ENCODE measurements at regions of chr6 and their contacts with region 1.

Region 1: DNA sequence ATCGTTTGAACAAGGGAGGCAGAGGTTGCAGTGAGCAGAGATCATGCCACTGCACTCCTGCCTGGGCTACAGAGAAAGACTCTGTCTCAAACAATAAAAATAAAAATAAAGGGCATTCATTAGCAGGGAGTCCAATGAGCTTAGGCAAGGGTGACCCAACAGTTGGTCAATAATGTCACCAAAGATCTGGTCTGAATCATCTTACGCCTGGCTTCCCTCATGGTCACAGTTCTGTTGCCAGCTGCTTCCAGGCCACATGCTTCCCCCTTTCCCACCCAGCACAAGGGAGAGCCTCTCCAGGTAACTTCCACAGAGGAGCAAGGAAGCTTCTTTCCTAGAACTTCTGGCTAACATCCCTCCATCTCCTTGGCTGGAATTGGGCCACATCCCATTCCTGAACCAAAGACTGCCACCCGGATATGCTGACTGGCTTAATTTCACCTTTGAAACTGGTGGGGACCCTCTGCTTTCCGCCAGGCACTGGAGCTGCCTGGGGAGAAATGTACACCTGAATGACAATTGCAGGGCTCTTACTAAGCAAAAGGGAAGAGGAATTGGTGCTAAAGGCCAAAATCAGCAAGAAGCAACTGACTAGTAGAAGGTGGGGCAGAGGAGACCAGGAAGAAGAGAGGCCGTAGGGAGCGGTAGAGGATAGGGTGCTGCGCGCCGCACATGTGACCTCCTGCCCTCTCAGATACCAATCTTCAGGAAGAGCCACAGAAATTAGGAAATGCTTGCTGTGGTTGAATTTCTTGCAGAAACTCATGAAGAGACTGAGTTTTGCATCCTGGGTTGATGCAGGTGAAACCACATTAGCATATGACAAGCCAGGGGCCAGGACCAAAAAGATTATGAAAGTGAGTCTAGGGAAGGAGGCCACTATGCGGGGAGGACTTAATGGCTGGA is 8.3 kb upstream of the SCML4 start:
- DNase-seq: no peak
- H3K4me3 ChIP-seq: no peak overlapping the region
- CTCF ChIP-seq: no peak

Region 2: DNA sequence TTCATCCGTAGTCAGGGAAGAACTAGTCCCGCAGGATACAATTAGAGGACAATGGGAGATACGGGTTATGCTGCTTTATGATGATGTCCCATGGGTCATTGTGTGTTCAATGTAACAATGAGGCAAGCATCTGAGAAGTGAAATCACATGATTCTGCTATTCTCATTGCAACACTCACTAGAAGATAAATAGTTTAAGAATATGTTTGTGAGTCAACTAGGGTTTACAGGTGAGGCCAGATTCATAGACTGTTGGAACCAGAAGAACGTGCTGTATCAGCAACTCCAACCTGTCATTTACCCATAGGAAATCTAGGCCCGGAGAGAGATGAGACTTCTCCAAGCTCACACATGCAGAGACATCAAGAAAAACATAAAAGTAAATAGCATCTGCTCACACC is 89.1 kb before region 1 on chr6:
- CTCF ChIA-PET with region 1: no interaction called
- POLR2A ChIA-PET with region 1: no interaction called
- DNase-seq: no peak
- H3K4me3 ChIP-seq: no peak overlapping the region
- CTCF ChIP-seq: no peak

Region 3: DNA sequence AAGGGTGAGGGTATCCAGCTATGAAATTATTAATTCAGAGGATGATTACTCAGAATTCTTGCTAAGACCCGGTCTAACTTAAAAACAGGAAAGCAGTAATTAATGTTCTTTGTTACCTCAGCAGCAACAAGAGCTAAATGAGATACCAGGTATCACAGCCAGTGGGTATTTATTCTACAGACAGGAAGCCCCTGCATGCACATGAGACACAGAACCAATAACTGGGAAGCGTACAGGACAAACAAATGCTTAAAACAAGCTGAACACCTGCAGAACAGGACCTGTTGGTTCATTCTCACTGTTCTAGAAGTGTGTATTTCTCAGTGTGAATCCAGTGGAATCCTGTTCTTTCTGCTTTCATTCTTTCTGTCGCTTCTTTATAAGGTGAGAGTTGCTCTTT is 39.2 kb before region 1 on chr6:
- CTCF ChIA-PET with region 1: no interaction called
- POLR2A ChIA-PET with region 1: no interaction called
- DNase-seq: no peak
- H3K4me3 ChIP-seq: no peak overlapping the region
- CTCF ChIP-seq: no peak

Region 4: DNA sequence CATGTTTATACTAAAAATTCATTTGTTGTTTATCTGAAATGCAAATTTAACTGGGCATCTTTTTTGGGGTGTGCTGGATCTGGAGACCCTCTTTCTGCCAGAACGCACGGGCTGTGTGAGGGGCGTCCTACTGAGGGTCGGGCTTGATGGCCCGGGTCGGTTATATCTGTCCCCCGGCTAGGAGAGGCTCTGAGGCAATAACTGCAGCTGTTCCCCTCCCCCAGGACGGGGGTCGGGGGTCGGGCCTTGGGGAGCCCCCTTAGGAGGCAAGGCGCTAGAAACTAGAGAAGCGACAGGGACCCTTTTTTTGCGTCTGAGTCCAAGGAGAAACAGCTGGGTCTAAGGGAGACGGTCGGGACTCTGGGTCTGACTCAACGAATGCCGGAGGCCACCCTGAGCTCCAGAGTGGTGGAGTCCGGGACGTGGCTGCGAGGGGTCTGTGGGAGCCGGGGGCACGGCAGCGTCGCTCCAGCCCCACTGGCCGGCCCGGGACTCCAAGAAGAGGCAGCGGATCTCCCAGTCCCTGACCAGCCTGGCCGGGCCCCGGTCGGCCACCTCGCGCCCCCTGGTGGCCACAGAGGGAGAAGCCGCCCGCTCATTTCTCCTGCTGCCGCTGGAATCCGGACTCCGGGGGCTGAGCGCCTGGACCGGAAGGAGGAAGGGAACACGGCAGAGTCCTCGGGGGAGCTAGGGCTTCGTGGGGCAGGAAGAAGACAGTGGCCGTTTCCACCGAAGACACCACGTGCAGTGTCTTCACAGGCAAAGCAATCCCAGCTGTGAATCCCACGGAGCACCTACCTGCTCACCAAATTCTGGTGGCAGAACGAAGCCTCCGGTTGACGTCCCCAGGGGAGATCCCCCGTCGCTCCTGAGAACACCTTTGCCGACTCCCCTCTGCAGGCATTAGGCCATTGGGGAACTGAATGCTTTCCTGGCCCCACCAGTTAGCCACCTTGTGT is 15.7 kb after region 1 on chr6:
- CTCF ChIA-PET with region 1: interaction called, 54 read pairs
- POLR2A ChIA-PET with region 1: no interaction called
- DNase-seq: no peak
- H3K4me3 ChIP-seq: peak overlapping the region; percentile 66
- CTCF ChIP-seq: peak; percentile 97

Measured in AG04449 (cell line).